ENCODE measurements at regions of chr6 and their contacts with region 1.

Region 1: GRCh38 chr6:33711140-33712129 is at the start of gene UQCC2:
- DNase-seq: peak; percentile 94 to 97 (median 97)
- ATAC-seq: peak; percentile 97
- H3K4me3 ChIP-seq: peak within 1 kb of the TSS; percentile 83
- H3K4me3 Mint-ChIP-seq: peak within 1 kb of the TSS; percentile 94 to 99 (median 98)
- H3K27ac ChIP-seq: peak within 1 kb of the TSS; percentile 91
- H3K27ac Mint-ChIP-seq: peak within 1 kb of the TSS; percentile 94 to 98 (median 98)
- H3K4me1 ChIP-seq: peaks cover 9 to 11% of the 10 kb centered on the region in 2 donors
- H3K4me1 Mint-ChIP-seq: peaks cover 22 to 46% (median 36%) of the 10 kb centered on the region in 7 donors
- H3K27me3 ChIP-seq: no peaks in the 10 kb centered on the region
- H3K27me3 Mint-ChIP-seq: peaks cover 0 to 9% (median 0%) of the 10 kb centered on the region in 5 donors
- total RNA-seq, gene UQCC2: 15.7 to 79.8 (median 23.0) TPM

Region 2: GRCh38 chr6:33620856-33621710 is 90.4 kb before region 1 on chr6 and contains the start of gene ITPR3:
- CTCF ChIA-PET with region 1: no interaction called
- POLR2A ChIA-PET with region 1: interaction called, 5 read pairs
- intact Hi-C with region 1: loop called in 1 of 2 experiments (anchors 1 kb)
- DNase-seq: peak; percentile 63 to 83 (median 80)
- ATAC-seq: peak; percentile 94
- H3K4me3 ChIP-seq: peak within 1 kb of the TSS; percentile 80
- H3K4me3 Mint-ChIP-seq: peak within 1 kb of the TSS; percentile 91 to 97 (median 96)
- H3K27ac ChIP-seq: peak within 1 kb of the TSS; percentile 97
- H3K27ac Mint-ChIP-seq: peak within 1 kb of the TSS; percentile 82 to 96 (median 94)
- H3K4me1 ChIP-seq: peaks cover 9 to 35% of the 10 kb centered on the region in 2 donors
- H3K4me1 Mint-ChIP-seq: peaks cover 29 to 74% (median 66%) of the 10 kb centered on the region in 7 donors
- H3K27me3 ChIP-seq: no peaks in the 10 kb centered on the region
- H3K27me3 Mint-ChIP-seq: peaks cover 0 to 2% (median 0%) of the 10 kb centered on the region in 5 donors
- total RNA-seq, gene ITPR3: 35.6 to 65.7 (median 47.7) TPM

Region 3: GRCh38 chr6:33700391-33701050 is 10.9 kb before region 1 on chr6:
- CTCF ChIA-PET with region 1: interaction called, 16 read pairs
- POLR2A ChIA-PET with region 1: interaction called, 53 read pairs
- intact Hi-C with region 1: loop called (anchors 1 to 2 kb)
- DNase-seq: peak; percentile 51 to 76 (median 71)
- ATAC-seq: peak; percentile 78
- H3K4me3 ChIP-seq: no peak overlapping the region
- H3K4me3 Mint-ChIP-seq: peak overlapping the region in 1 of 10 donors; percentile 32
- H3K27ac ChIP-seq: peak overlapping the region; percentile 38
- H3K27ac Mint-ChIP-seq: peak overlapping the region; percentile 53 to 93 (median 84)
- H3K4me1 ChIP-seq: peaks cover 19 to 37% of the 10 kb centered on the region in 2 donors
- H3K4me1 Mint-ChIP-seq: peaks cover 21 to 59% (median 44%) of the 10 kb centered on the region in 7 donors
- H3K27me3 ChIP-seq: no peaks in the 10 kb centered on the region
- H3K27me3 Mint-ChIP-seq: no peaks in the 10 kb centered on the region

Region 4: DNA sequence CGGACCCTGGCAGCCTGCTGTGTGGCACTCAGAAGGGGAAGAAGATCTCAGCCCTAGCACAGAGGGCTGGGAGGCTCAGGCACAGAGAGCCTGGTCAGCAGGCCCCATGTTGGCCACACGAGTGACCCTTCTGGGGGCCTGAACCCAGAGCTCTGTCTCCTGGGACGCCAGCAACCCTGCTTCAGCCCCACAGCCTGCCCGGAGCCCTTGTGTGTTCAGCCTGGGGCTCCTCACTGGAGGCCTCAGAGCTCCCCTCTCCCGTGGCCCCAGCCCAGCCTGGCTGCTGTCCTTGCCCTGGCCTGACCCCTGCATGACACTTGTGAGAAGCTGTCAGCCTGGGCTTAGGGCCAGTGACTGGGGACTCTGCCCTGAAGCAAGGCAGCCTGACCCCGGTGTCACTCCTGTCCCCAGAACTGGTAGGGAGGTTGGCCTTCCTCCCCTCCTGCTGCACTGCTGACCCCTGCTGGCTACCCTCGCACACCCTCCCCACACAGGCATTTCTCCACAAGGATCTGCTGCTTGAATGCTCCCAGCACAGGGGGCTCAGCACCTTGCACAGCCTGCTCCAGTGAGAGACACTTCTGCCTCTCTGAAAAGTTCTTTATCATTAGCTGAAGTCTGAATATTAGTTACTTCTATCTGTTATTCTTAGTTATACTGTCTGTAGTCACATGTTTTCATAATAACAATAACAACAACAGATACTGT is 50.6 kb after region 1 on chr6:
- CTCF ChIA-PET with region 1: interaction called, 19 read pairs
- POLR2A ChIA-PET with region 1: no interaction called
- intact Hi-C with region 1: loop called (anchors 1 kb)
- DNase-seq: peak in 6 of 9 donors; percentile 21 to 34 (median 30)
- ATAC-seq: peak; percentile 67
- H3K4me3 ChIP-seq: no peak overlapping the region
- H3K4me3 Mint-ChIP-seq: no peak overlapping the region
- H3K27ac ChIP-seq: no peak overlapping the region
- H3K27ac Mint-ChIP-seq: peak overlapping the region in 1 of 9 donors; percentile 8
- H3K4me1 ChIP-seq: no peaks in the 10 kb centered on the region
- H3K4me1 Mint-ChIP-seq: no peaks in the 10 kb centered on the region
- H3K27me3 ChIP-seq: no peaks in the 10 kb centered on the region
- H3K27me3 Mint-ChIP-seq: peaks cover 0 to 8% (median 5%) of the 10 kb centered on the region in 5 donors

Region 5: GRCh38 chr6:33904050-33904746 is 192.8 kb after region 1 on chr6:
- CTCF ChIA-PET with region 1: no interaction called
- POLR2A ChIA-PET with region 1: interaction called, 3 read pairs
- intact Hi-C with region 1: loop called (anchors 5 kb)
- DNase-seq: peak; percentile 36 to 83 (median 75)
- ATAC-seq: peak; percentile 85
- H3K4me3 ChIP-seq: peak overlapping the region; percentile 28
- H3K4me3 Mint-ChIP-seq: peak overlapping the region; percentile 67 to 85 (median 82)
- H3K27ac ChIP-seq: peak overlapping the region; percentile 77
- H3K27ac Mint-ChIP-seq: peak overlapping the region; percentile 84 to 97 (median 95)
- H3K4me1 ChIP-seq: peaks cover 55 to 66% of the 10 kb centered on the region in 2 donors
- H3K4me1 Mint-ChIP-seq: peaks cover 54 to 88% (median 80%) of the 10 kb centered on the region in 7 donors
- H3K27me3 ChIP-seq: no peaks in the 10 kb centered on the region
- H3K27me3 Mint-ChIP-seq: peaks cover 0 to 2% (median 0%) of the 10 kb centered on the region in 5 donors

Region 6: GRCh38 chr6:34154668-34155447 is 443.4 kb after region 1 on chr6:
- CTCF ChIA-PET with region 1: interaction called, 3 read pairs
- POLR2A ChIA-PET with region 1: no interaction called
- intact Hi-C with region 1: loop called in 1 of 2 experiments (anchors 1 kb)
- DNase-seq: peak; percentile 28 to 80 (median 70)
- ATAC-seq: peak; percentile 91
- H3K4me3 ChIP-seq: peak overlapping the region; percentile 37
- H3K4me3 Mint-ChIP-seq: peak overlapping the region in 8 of 10 donors; percentile 29 to 74 (median 54)
- H3K27ac ChIP-seq: no peak overlapping the region
- H3K27ac Mint-ChIP-seq: no peak overlapping the region
- H3K4me1 ChIP-seq: peaks cover 3 to 9% of the 10 kb centered on the region in 2 donors
- H3K4me1 Mint-ChIP-seq: peaks cover 0 to 10% (median 5%) of the 10 kb centered on the region in 7 donors
- H3K27me3 ChIP-seq: peaks cover 2 to 6% of the 10 kb centered on the region in 2 donors
- H3K27me3 Mint-ChIP-seq: peaks cover 25 to 82% (median 34%) of the 10 kb centered on the region in 5 donors